AG04450 (cell line): ENCODE measurements at regions of chr5 and their contacts with region 1.

Region 1: GRCh38 chr5:148730943-148731861 is 76.9 kb upstream of the HTR4 start:
- DNase-seq: peak; percentile 72
- H3K4me3 ChIP-seq: no peak overlapping the region; the same call in 1 of the 2 replicates
- H3K27ac ChIP-seq: no peak overlapping the region
- H3K27me3 ChIP-seq: peaks cover 3% of the 10 kb centered on the region
- CTCF ChIP-seq: peak; percentile 84

Region 2: DNA sequence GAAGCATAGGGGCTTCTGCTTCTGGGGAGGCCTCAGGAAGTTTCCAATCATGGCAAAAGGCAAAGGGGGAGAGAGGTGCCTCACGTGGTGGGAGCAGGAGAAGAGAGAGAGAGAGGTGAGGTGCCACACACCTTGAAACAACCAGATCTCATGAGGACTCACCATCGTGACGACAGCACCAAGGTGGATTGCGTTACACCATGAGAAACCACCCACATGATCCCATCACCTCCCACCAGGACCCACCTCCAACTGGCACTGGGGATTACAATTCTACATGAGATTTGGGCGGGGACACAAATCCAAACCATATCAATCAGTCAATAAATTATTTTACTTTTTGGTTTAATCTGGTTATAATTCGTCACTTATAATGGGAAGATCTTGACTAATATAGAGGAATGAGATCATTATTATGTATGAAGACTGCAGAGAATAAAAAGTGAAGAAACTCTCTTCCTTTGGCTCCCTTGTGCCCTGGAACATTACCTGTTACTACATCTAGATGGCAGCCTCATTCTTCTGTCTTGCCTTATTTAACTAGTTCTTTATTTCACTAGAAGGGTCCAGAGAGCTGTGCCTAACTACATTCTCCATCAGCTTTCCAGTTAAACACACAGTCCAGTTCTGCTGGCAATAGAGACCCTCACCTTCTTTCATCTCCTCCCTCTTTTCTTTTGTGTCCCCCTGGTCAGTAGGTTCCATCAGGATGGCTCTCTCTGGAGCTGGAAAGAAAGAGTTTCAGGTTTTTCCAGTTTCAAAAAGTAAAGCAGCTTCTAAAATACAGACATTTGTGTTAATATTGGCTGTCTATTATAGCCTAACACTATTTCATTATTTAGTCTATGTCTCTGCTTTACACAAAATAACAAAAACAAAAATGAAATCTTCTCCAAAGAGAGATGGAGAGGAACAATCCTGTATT is 440.7 kb before region 1 on chr5:
- CTCF ChIA-PET with region 1: interaction called, 34 read pairs
- POLR2A ChIA-PET with region 1: no interaction called
- DNase-seq: no peak
- H3K4me3 ChIP-seq: no peak overlapping the region
- H3K27ac ChIP-seq: no peak overlapping the region
- H3K27me3 ChIP-seq: peaks cover 2% of the 10 kb centered on the region
- CTCF ChIP-seq: peak; percentile 53

Region 3: GRCh38 chr5:148443998-148444397 is 287.2 kb before region 1 on chr5:
- CTCF ChIA-PET with region 1: interaction called, 380 read pairs
- POLR2A ChIA-PET with region 1: no interaction called
- DNase-seq: peak; percentile 49
- H3K4me3 ChIP-seq: no peak overlapping the region
- H3K27ac ChIP-seq: no peak overlapping the region
- H3K27me3 ChIP-seq: no peaks in the 10 kb centered on the region
- CTCF ChIP-seq: peak; percentile 71

Region 4: DNA sequence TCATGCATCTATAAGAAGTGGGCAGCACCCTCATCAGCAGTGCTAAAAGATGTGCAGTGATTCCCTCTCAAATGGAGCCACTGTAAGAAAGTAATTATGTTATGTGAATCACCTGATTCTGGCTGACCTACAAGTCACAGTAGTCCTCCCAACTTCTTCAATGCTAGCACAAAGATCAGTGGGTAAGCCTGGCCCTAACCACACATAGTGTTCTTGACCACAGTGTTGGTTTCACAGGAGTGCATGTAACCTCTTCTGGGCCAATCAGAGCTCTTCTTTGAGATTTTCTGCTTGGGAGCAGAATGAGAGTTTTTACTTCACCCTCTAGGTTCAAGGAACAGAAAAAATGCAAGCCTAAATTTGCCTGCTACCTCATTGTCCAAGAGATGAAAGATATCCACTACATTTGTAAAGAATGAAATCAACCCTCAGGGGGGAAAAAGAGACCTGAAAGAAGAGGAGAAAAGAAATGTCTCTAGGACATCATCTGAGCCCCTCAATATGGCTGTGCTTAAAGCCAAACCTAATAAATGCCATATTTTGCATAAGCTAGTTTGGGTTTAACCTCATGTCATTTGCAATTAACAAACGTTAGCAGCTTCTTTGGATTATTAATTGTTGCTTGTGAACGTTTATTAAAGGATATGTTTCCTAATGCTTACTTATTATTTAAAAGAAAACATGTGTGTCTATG is 29.9 kb after region 1 on chr5:
- CTCF ChIA-PET with region 1: interaction called, 15 read pairs
- POLR2A ChIA-PET with region 1: no interaction called
- DNase-seq: no peak
- H3K4me3 ChIP-seq: no peak overlapping the region
- H3K27ac ChIP-seq: no peak overlapping the region
- H3K27me3 ChIP-seq: no peaks in the 10 kb centered on the region
- CTCF ChIP-seq: no peak

Region 5: GRCh38 chr5:148984333-148984732 is 253.1 kb after region 1 on chr5:
- CTCF ChIA-PET with region 1: interaction called, 13 read pairs
- POLR2A ChIA-PET with region 1: no interaction called
- DNase-seq: no peak
- H3K4me3 ChIP-seq: no peak overlapping the region
- H3K27ac ChIP-seq: no peak overlapping the region
- H3K27me3 ChIP-seq: no peaks in the 10 kb centered on the region
- CTCF ChIP-seq: no peak

Region 6: GRCh38 chr5:149053072-149053695 is 322.0 kb after region 1 on chr5:
- CTCF ChIA-PET with region 1: interaction called, 32 read pairs
- POLR2A ChIA-PET with region 1: no interaction called
- DNase-seq: no peak
- H3K4me3 ChIP-seq: no peak overlapping the region
- H3K27ac ChIP-seq: no peak overlapping the region
- H3K27me3 ChIP-seq: no peaks in the 10 kb centered on the region
- CTCF ChIP-seq: no peak